Right ventricle myocardium inferior (tissue), 1 donor: ENCODE measurements at regions of chr14 and their contacts with region 1.

Region 1: GRCh38 chr14:78022059-78022458 is 148.1 kb upstream of the NRXN3 start:
- DNase-seq: no peak
- ATAC-seq: no peak

Region 2: DNA sequence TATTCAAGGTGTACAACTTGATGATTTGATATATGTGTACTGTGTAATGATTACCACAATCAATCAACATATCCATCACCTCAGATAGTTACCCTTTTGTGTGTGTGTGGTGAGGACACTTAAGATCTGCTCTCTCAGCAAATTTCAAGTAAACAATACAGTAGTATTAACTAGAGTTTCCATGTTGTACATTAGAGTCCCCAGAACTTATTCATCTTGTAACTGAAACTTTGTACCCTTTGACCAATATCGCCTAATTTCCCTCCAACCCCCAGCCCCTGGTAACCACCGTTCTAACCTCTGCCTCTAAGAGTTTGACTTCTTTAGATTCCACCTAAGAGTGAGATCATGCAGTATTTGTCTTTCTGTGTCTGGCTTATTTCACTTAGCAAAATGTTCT is 210.0 kb before region 1 on chr14:
- intact Hi-C with region 1: no loop called
- DNase-seq: no peak
- ATAC-seq: no peak

Region 3: GRCh38 chr14:78598041-78598920 is 576.2 kb after region 1 on chr14:
- intact Hi-C with region 1: loop called (anchors 10 kb)
- DNase-seq: no peak
- ATAC-seq: peak; percentile 75